ENCODE measurements at regions of chr7 and their contacts with region 1.

Region 1: GRCh38 chr7:50369143-50370026 is 64.9 kb downstream of the IKZF1 start:
- DNase-seq: peak; percentile 11
- ATAC-seq: no peak
- H3K4me3 ChIP-seq: no peak overlapping the region
- H3K27ac ChIP-seq: no peak overlapping the region
- H3K4me1 ChIP-seq: no peaks in the 10 kb centered on the region
- H3K27me3 ChIP-seq: no peaks in the 10 kb centered on the region
- CTCF ChIP-seq: peak; percentile 54
- EP300 ChIP-seq: no peak
- POLR2A ChIP-seq: no peak
- RAD21 ChIP-seq: no peak

Region 2: DNA sequence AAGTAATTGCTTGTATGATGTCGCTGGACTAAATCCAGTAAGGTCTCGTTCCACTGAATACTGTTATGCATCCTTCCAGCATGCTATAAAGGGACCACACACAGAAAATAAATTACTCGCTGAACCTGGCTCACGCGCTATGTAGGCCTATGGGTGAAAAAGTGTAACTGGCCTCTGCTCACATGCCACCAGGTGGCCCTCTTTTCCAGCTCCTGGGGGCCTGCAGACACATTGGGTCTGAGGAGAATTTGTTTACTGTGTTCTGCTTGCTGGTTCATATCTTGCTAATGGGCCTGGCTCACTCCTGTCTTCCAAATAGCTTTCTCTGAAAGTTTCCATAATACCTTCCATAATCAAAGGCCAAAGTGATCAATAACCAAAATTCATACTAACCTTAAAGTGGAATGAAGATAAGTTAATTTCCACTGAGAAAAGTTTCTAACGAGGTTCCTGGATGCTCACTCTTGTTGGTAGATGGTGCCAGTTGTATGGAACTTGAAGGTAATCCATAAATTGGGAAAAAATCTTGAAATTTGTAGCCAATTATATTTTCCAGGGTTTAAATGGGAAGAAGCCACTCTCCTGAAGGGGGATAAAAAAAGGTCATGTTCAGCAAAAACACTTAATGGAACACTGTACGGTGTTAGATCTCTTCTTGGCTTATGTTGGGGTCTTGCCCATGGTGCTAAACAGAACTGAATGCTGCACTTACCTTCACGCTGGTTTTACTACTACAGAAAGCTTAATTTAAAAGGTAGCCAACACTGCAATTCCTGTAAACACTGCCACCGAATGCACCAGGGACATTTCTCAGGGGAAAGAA is 249.4 kb before region 1 on chr7:
- CTCF ChIA-PET with region 1: no interaction called
- POLR2A ChIA-PET with region 1: no interaction called
- in situ Hi-C with region 1: no loop called
- intact Hi-C with region 1: loop called (anchors 1 kb)
- DNase-seq: peak; percentile 21
- ATAC-seq: peak; percentile 97
- H3K4me3 ChIP-seq: no peak overlapping the region
- H3K27ac ChIP-seq: no peak overlapping the region
- H3K4me1 ChIP-seq: no peaks in the 10 kb centered on the region
- H3K27me3 ChIP-seq: no peaks in the 10 kb centered on the region
- CTCF ChIP-seq: peak; percentile 61
- EP300 ChIP-seq: no peak
- POLR2A ChIP-seq: no peak
- RAD21 ChIP-seq: no peak

Region 3: DNA sequence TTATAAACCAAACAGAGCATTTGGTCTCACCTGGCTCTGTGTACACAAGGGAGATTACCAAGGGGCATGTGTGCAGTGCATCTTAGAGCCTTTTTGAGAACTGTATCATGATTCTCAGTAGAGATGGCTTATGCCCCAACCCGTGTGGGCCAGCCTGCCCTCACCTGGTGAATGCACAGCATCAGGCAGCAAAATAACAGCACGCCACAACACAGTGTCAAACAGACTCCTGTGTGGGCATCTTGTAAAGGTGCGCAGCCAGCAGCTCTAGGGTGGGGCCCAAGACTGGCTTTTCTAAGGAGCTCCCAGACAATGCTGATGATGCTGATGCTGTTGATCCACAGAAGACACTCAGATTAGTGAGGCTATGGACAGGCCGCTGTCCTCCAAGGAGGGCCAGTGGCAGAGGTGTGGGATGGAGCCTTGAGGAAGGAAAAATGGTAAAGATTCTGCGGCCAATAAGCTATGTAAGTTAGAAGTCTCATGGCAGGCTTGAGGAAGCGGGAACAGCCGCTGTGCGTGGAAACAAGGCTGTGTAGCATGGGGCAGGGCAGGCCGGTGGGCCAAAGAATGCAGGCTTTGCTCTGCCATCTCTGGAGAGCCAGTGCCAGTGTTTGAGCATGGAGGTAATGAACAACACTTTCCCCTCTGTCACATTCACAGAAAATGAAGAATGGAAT is 97.3 kb after region 1 on chr7:
- CTCF ChIA-PET with region 1: no interaction called
- POLR2A ChIA-PET with region 1: no interaction called
- in situ Hi-C with region 1: no loop called
- intact Hi-C with region 1: no loop called
- DNase-seq: no peak
- ATAC-seq: no peak
- H3K4me3 ChIP-seq: no peak overlapping the region
- H3K27ac ChIP-seq: no peak overlapping the region
- H3K4me1 ChIP-seq: peaks cover 8% of the 10 kb centered on the region
- H3K27me3 ChIP-seq: no peaks in the 10 kb centered on the region
- CTCF ChIP-seq: no peak
- EP300 ChIP-seq: no peak
- POLR2A ChIP-seq: no peak
- RAD21 ChIP-seq: no peak